Heart right ventricle (tissue), 16 donors: ENCODE measurements at regions of chrX and their contacts with region 1.

Region 1: DNA sequence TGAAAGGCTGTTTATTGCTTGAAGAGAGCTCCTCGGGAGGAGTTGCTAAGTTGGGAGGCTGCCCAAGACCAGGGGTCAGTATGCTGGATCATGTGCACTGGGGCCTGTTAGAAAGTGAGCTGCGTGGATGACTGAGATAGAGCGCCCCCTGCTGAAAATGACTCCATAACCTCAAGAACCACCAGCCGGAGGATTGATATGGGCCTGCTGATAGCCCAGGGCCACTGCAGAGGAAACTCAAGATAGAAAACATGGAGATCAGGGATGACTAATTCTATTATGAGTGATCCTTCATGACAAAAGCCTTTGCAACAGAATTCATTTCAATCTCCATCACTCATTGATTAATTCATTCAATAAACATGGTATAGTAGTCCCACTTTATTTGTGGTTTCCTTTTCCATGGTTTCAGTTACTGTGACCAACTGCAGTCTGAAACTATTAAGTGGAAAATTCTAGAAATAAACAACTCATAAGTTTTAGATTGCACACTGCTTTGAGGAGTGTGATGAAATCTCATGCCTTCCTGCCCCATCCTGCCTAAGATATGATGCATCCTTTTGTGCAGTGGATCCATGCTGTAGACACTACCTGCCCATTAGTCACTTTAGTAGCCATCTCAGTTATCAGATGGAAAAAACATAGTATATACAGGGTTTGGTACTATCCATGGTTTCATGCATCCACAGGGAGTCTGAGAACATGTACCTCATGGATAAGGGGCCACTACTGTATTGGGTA is 126.7 kb upstream of the MBNL3 start:
- DNase-seq: peak in 1 of 2 donors; percentile 9
- ATAC-seq: no peak
- H3K4me3 ChIP-seq: no peak overlapping the region
- H3K27ac ChIP-seq: no peak overlapping the region
- H3K4me1 ChIP-seq: no peaks in the 10 kb centered on the region
- H3K27me3 ChIP-seq: peaks cover 0 to 39% (median 0%) of the 10 kb centered on the region in 7 donors
- CTCF ChIP-seq: peak in 7 of 9 donors; percentile 30 to 64 (median 38)

Region 2: GRCh38 chrX:132092439-132093065 is 523.0 kb before region 1 on chrX:
- intact Hi-C with region 1: loop called in 3 of 10 experiments (anchors 5 to 10 kb)
- DNase-seq: peak in 1 of 2 donors; percentile 43
- ATAC-seq: peak in 4 of 8 donors; percentile 44 to 76 (median 54)
- H3K4me3 ChIP-seq: no peak overlapping the region
- H3K27ac ChIP-seq: no peak overlapping the region
- H3K4me1 ChIP-seq: no peaks in the 10 kb centered on the region
- H3K27me3 ChIP-seq: peaks cover 0 to 80% (median 0%) of the 10 kb centered on the region in 7 donors
- CTCF ChIP-seq: peak; percentile 54 to 78 (median 70)

Region 3: DNA sequence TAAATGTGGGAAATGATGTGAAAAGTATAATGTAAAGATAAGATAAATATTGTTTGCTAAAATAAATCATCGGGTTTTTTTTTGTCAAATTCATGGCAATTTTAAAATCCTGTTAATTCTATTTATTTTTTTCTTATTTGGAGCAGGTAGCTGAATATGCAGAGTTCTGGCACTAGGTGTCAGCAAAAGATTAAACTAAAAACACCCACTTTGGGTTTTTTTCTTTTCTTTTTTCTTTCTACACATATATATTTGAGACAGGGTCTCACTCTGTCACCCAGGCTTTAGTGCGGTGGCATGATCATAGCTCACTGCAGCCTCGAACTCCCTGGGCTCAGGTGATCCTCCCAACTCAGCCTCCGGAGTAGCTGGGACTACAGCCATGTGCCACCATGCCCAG is 389.4 kb before region 1 on chrX:
- intact Hi-C with region 1: loop called in 3 of 10 experiments (anchors 5 to 10 kb)
- DNase-seq: no peak
- ATAC-seq: no peak
- H3K4me3 ChIP-seq: no peak overlapping the region
- H3K27ac ChIP-seq: no peak overlapping the region
- H3K4me1 ChIP-seq: no peaks in the 10 kb centered on the region
- H3K27me3 ChIP-seq: peaks cover 0 to 10% (median 0%) of the 10 kb centered on the region in 7 donors
- CTCF ChIP-seq: peak in 7 of 9 donors; percentile 11 to 47 (median 39)

Region 4: GRCh38 chrX:132821974-132822633 is 206.5 kb after region 1 on chrX:
- intact Hi-C with region 1: no loop called
- DNase-seq: no peak
- ATAC-seq: no peak
- H3K4me3 ChIP-seq: no peak overlapping the region
- H3K27ac ChIP-seq: no peak overlapping the region
- H3K4me1 ChIP-seq: no peaks in the 10 kb centered on the region
- H3K27me3 ChIP-seq: peaks cover 0 to 22% (median 0%) of the 10 kb centered on the region in 7 donors
- CTCF ChIP-seq: no peak